WTC11 (cell line): ENCODE measurements at regions of chr4 and their contacts with region 1.

Region 1: DNA sequence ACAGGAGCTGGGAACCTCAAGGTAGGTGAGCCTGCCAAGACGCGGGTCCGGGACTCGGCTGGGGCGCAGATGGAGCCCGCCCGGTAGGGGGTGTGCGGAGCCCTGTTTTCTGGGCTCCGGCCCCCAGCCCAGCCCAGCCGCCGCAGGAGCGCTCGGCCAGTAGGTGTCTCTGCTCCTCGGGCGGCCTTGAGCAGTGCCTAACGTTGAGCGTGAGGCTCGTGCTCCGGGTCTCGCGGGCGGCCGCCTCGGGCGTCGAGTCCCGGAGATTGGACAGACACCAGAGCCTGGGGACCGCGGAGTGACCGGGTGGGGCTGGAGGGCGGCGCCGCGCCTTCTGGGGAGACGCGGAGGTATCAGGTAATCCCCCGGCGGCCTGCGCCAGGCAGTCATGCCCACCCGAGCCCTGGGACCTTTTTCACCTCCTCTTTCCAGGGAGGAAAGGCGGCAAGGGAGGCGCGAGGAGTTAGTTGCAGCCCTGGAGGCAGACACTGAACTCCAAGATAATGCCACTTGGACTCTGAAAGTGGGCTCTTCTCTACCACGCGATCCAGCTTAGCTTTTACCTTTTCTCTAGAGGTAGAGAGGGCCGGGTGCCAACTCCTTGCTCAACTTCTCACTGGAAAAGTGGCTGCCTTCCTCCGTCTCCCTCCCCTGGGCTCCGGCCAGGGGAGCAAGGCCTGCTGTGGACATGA is 14.5 kb upstream of the FGG start:
- DNase-seq: peak; percentile 84
- ATAC-seq: peak; percentile 94
- H3K4me3 Mint-ChIP-seq: no peak overlapping the region
- H3K27ac Mint-ChIP-seq: no peak overlapping the region
- H3K4me1 Mint-ChIP-seq: peaks cover 6% of the 10 kb centered on the region
- H3K27me3 Mint-ChIP-seq: peaks cover 10% of the 10 kb centered on the region
- CTCF ChIP-seq: peak; percentile 41; the same call in 1 of the 2 replicates

Region 2: DNA sequence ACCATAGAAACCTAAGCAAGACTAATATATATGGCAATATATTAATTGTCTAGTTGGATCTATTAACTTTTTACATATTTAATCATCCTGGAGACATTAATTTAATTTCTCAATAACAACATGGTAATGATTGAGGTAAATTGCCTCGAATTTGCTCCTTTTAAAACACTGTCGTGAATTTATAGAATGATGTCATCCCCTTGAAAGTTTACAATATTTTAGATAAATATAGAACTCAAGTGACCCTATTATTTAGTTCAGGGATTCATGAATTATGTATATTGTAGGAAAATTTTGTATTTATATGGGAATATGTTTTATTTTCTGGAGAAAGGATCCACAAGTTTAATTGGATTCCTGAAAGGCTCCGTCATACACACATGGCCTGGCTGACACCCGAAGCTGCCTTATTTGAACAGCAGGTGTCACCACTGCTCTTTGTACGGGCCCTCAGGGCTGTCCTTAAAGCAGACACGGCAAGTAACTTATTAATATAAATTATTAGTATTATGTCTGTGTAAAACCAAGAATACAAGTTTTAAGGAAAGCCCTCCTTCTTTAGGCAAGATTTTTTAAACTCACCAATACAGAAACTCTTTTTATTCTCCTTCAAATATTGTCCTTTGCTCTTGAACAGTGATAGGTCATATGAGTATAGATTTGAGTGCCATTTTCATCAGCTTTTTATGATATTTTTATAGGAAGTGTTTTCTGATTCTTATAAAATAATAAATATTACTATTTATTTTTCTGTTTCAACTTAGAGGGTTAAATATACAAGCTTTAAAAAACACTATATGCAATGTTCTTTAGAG is 74.9 kb before region 1 on chr4:
- CTCF ChIA-PET with region 1: interaction called, 104 read pairs
- POLR2A ChIA-PET with region 1: no interaction called
- DNase-seq: peak; percentile 68
- ATAC-seq: peak; percentile 57
- H3K4me3 Mint-ChIP-seq: no peak overlapping the region
- H3K27ac Mint-ChIP-seq: no peak overlapping the region
- H3K4me1 Mint-ChIP-seq: peaks cover 9% of the 10 kb centered on the region
- H3K27me3 Mint-ChIP-seq: no peaks in the 10 kb centered on the region
- CTCF ChIP-seq: peak; percentile 51